PC-3 (cell line): ENCODE measurements at regions of chr6 and their contacts with region 1.

Region 1: DNA sequence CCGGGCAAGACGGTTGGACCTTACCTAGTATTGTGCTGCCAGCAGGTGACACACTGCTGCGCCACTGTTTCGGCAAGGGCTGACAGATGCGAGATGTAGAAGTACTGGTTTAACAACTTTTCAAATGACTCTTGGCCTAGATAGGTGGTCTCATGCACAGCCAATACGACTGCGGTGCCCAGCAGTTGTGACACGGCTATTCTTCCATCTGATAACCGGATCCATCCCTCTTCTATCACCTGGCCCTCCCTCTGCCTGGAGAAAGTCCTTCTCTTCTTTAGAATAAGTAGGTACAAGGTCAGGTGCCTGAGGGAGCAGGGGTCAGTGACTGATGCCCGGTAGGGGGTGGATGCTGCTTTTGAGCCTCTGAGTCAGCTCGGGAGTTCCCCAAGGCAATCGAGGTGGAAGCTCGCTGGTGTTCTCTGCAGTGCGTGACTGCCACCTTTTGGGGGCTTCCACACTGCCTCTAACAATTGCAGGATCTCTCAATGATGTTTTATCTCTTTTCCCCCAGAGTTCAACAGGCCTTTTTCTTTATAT is 166.8 kb upstream of the GRIK2 start:
- DNase-seq: peak; percentile 82
- ATAC-seq: peak; percentile 81
- H3K4me3 ChIP-seq: peak overlapping the region; percentile 9; the same call in 1 of the 2 replicates
- H3K27ac ChIP-seq: peak overlapping the region; percentile 65
- H3K4me1 ChIP-seq: peaks cover 12% of the 10 kb centered on the region
- H3K27me3 ChIP-seq: no peaks in the 10 kb centered on the region
- CTCF ChIP-seq: peak; percentile 75

Region 2: DNA sequence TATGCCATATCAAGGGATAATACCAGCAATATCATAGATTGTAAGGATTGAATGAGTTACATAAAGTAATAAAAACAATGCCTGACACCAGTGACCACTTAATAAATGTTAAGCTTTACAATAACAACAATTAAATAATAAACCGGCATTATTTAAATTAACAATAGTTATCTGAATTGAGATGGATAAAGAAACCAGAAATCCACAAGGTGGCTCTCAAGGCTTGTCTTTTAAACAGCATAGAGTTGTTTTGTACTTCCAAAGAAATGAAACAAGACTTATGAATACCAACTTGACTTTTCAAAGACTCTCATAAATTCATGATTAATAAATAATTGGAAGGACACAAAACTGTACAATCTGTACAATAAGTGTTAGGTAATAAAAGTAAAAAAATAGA is 548.7 kb before region 1 on chr6:
- CTCF ChIA-PET with region 1: no interaction called
- POLR2A ChIA-PET with region 1: no interaction called
- intact Hi-C with region 1: loop called (anchors 5 kb)
- DNase-seq: no peak
- ATAC-seq: no peak
- H3K4me3 ChIP-seq: no peak overlapping the region
- H3K27ac ChIP-seq: no peak overlapping the region
- H3K4me1 ChIP-seq: no peaks in the 10 kb centered on the region
- H3K27me3 ChIP-seq: no peaks in the 10 kb centered on the region
- CTCF ChIP-seq: peak; percentile 40; the same call in 1 of the 2 replicates

Region 3: GRCh38 chr6:100775667-100776066 is 451.0 kb before region 1 on chr6:
- CTCF ChIA-PET with region 1: no interaction called
- POLR2A ChIA-PET with region 1: no interaction called
- intact Hi-C with region 1: loop called (anchors 10 kb)
- DNase-seq: peak; percentile 34
- ATAC-seq: no peak
- H3K4me3 ChIP-seq: no peak overlapping the region
- H3K27ac ChIP-seq: no peak overlapping the region
- H3K4me1 ChIP-seq: peaks cover 9% of the 10 kb centered on the region
- H3K27me3 ChIP-seq: no peaks in the 10 kb centered on the region
- CTCF ChIP-seq: peak; percentile 60

Region 4: DNA sequence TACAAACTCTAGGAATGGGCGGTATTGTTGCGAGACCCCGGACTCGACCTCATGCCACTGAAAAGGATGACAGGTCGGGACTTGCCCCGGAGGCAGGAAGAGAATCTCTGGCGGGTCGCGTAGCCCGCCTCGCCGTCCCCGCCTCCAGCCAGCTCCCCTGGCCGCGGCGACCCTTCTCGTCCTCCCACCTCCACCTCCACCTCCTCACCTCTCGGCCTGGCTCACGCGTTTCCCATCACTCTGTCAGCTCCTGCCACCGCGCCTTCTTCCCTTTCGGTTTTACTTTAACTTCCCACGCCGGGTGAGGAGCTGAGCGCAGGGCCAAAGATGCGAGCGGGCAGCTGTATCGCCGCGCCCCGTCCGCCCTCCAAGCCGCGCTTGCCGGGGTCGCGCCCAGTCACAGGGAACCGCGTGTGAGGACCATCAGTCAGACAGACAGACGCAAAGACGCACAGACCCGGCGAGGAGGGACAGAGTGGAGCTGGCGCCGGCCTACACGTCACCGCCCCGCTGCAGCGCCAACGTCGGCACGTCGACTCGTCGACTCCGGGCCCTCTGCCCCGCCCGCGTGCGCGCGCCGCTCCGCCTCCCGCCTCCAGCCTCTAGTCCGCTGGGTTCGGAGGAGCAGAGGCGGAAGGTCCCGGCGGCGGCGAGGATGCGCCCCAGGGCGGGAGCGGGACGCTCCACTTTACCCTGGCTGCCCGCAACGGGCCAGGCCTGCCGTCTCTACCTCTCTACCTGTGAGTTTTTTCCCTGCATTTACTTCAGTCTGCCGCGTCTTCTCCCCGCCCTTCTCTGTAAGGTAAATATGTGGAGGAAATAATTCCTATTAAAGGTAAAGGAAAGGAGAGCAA is 345.6 kb before region 1 on chr6 and contains the start of gene ASCC3:
- CTCF ChIA-PET with region 1: no interaction called
- POLR2A ChIA-PET with region 1: no interaction called
- intact Hi-C with region 1: loop called (anchors 10 kb)
- DNase-seq: peak; percentile 88
- ATAC-seq: peak; percentile 96
- H3K4me3 ChIP-seq: peak within 1 kb of the TSS; percentile 96
- H3K27ac ChIP-seq: peak within 1 kb of the TSS; percentile 81
- H3K4me1 ChIP-seq: peaks cover 20% of the 10 kb centered on the region
- H3K27me3 ChIP-seq: no peaks in the 10 kb centered on the region
- CTCF ChIP-seq: no peak
- total RNA-seq, gene ASCC3: 27.7 and 29.8 TPM in 2 replicates

Region 5: DNA sequence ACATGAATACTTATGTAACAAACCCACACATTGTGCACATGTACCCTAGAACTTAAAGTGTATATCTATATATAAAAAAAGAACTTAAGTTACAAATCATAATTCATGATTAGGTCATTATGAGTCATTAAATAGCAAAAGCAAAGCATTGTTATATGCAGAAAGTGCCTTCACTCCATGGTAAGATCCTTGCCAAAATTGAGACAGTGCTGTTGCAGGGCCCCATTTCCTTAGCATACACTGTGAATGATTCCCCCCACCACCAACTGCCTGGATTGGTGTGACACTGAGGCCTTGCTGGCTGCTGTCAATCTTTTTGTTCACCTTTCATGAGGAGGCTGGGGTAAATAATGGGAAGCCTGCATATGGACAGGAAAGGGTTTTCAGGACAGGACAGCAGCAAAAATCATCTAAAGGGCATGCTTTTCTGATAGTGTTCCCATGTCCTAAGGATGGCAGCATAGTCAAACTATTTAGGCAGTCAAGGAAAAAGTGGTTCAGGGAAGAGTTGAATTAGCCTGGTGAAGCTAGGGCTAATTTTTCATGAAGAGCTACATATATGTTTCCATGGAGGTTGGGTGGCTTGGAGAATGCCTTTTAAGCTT is 157.4 kb before region 1 on chr6:
- CTCF ChIA-PET with region 1: no interaction called
- POLR2A ChIA-PET with region 1: no interaction called
- intact Hi-C with region 1: loop called (anchors 2 kb)
- DNase-seq: peak; percentile 78
- ATAC-seq: peak; percentile 99
- H3K4me3 ChIP-seq: no peak overlapping the region
- H3K27ac ChIP-seq: peak overlapping the region; percentile 82
- H3K4me1 ChIP-seq: peaks cover 8% of the 10 kb centered on the region
- H3K27me3 ChIP-seq: no peaks in the 10 kb centered on the region
- CTCF ChIP-seq: peak; percentile 43; the same call in 1 of the 2 replicates

Region 6: GRCh38 chr6:101114703-101115102 is 112.0 kb before region 1 on chr6:
- CTCF ChIA-PET with region 1: no interaction called
- POLR2A ChIA-PET with region 1: no interaction called
- intact Hi-C with region 1: loop called (anchors 2 kb)
- DNase-seq: peak; percentile 58
- ATAC-seq: peak; percentile 51
- H3K4me3 ChIP-seq: no peak overlapping the region
- H3K27ac ChIP-seq: no peak overlapping the region
- H3K4me1 ChIP-seq: peaks cover 53% of the 10 kb centered on the region
- H3K27me3 ChIP-seq: no peaks in the 10 kb centered on the region
- CTCF ChIP-seq: peak; percentile 66